ENCODE measurements at regions of chr17 and their contacts with region 1.

Region 1: DNA sequence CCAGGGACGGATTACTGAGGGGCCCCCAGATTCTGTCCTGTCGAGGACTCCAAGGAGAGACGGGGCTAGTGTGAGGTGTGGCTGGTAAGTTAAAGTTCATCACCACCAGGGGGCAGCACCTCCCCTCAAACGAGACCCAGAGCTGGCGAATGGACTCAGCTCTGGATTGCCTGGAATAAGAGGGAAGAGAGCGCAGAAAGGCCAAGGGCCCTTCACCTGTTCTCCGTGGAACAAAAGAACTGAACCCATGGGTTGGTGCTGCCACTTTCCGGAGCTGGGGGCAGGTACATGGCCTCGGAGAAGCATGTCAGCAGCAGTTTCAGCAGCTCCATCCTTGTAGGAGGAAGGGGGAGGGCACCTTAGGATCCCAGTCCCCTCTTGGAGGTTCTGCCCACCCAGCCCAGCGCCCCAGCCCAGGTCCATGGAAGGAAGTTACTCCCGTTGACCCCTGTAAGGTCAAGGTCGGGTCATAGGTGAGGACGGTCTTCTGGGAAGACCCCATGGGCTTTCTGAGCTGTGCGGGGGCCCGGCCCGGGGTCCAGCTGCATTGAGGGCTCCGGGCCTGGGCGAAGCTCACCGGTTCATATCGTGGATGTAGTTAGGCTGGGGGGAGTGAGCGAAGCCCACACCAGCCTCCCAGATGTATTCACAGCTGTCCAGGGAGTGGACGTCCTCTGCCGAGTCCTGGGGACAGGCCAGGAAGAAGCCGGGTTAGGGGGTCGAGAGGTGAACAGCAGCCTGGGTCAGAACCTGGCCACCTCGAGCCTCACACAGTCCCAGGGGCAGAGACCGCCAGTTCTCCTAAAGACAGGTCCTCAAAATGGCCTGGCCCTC is 10.7 kb downstream of the HID1 start:
- DNase-seq: no peak
- H3K4me3 ChIP-seq: no peak overlapping the region
- H3K27ac ChIP-seq: no peak overlapping the region
- H3K4me1 ChIP-seq: peaks cover 6% of the 10 kb centered on the region
- H3K27me3 ChIP-seq: no peaks in the 10 kb centered on the region
- CTCF ChIP-seq: peak; percentile 61 to 88 (median 65)
- POLR2A ChIP-seq: no peak

Region 2: DNA sequence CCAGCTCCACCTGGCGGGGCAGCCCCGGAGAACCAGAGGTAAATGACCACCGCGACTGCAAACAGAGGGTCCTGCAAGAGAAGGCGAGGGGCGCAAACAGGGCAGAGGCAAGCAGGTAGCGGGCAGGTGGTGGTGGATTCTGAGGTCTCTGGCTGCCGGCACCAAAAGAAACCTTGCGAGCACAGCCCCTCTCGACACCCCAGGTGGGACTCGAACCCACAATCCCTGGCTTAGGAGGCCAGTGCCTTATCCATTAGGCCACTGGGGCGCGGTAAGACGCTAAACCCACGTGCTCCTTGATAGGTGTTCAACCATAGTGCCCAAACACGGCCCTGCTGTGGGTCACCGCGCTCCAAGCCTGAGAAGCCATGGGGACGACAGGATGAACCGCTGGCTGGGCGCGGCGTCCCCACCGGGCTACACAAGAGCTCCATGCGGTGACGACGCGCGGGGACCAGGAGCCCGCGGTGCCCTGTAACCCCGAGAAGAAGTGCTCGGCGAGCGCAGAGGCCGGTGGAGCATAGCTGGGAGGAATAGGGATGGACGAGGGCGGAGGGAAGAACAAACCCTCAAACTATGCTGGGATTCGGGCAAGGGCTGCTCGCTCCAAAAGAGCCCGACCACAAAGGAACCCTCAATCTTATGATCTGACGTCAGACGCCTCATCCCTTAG is 72.5 kb after region 1 on chr17:
- intact Hi-C with region 1: loop called (anchors 10 kb)
- DNase-seq: peak in 1 of 2 donors; percentile 96
- H3K4me3 ChIP-seq: peak overlapping the region; percentile 66 to 81
- H3K27ac ChIP-seq: peak overlapping the region; percentile 98
- H3K4me1 ChIP-seq: peaks cover 37% of the 10 kb centered on the region
- H3K27me3 ChIP-seq: no peaks in the 10 kb centered on the region
- CTCF ChIP-seq: peak in 1 of 3 experiments; percentile 14
- POLR2A ChIP-seq: no peak

Region 3: DNA sequence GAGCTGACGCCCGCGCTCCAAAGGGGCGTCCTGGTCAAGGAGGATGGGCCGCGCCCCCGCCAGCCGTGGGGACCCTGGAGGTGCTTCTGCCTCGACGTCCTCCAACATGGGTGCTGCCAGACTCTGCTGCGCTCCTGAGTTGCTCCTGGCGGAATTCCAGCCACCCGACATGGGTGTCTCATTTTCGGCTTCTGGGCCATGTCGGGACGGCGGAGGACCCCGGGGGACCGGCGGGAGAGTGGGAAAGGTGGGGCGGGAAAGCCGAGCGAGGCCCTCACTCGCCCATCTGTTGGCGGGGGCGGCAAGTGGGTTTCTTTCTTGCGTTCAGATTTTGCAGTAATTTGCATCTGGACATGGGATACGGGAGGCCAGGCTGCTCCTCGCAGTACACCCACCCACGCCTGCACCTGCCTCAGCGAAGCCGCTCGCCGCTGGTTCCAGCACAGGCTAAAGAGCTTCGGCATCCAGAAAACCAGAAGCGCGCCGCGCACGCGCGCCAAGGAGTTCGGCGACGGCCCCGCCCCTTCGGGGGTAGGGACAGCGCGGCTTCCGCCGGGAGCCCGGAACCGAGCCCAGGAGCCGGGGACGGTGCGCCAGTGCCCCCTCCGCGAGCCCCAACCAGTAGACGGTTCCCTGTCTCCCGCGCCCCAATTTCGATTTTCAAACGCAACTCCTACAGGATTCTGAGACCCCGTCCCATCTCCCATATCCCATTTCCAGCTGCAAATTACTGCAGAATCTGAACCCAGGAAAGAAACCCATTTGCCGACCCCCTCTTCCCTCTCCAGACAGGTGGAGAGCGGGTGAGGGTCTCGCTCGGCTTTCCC is 147.7 kb after region 1 on chr17 and contains the start of gene ARMC7:
- intact Hi-C with region 1: loop called (anchors 10 kb)
- DNase-seq: no peak
- H3K4me3 ChIP-seq: peak within 1 kb of the TSS; percentile 86 to 95
- H3K27ac ChIP-seq: peak within 1 kb of the TSS; percentile 87
- H3K4me1 ChIP-seq: peaks cover 34% of the 10 kb centered on the region
- H3K27me3 ChIP-seq: no peaks in the 10 kb centered on the region
- CTCF ChIP-seq: no peak
- POLR2A ChIP-seq: peak in 1 of 2 donors; percentile 62
- total RNA-seq, gene ARMC7: 12.8 TPM

Region 4: DNA sequence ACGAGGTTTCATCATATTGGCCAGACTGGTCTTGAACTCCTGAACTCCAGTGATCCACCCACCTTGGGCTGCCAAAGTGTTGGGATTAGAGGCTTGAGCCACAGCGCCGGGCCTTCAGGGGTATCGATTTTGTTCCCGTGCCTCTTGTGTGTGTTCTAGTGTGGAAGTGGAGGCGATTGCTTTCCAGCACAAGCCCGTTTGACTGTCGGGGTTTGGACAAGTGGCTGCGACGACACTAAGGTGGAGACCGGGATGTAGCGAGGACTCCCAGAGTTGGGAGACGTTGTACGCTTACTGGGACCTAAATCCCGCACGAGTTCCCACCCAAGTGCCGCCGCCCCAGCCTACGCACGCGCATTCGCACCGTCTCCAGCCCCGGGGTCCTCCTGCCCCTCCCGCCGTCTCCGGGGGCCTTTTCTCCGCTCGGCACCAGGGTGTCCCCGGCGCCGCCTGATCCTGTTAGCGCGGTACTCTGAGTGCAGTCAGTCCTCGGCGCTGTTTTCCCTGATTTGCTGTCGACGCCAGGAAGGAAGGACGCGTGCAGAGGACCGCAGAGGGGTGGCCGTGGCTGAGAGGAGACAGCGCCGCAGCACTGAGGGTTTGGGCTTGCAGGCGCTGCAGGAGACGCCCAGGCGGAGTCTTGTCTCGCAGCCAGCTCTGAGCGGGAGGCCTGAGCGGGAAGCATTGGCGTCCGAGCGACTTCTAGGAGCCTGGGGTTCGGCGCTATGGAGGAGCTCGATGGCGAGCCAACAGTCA is 243.3 kb after region 1 on chr17 and contains the start of gene NUP85:
- intact Hi-C with region 1: loop called (anchors 5 kb)
- DNase-seq: peak; percentile 92 to 97
- H3K4me3 ChIP-seq: peak within 1 kb of the TSS; percentile 73 to 99
- H3K27ac ChIP-seq: peak within 1 kb of the TSS; percentile 94
- H3K4me1 ChIP-seq: peaks cover 30% of the 10 kb centered on the region
- H3K27me3 ChIP-seq: no peaks in the 10 kb centered on the region
- CTCF ChIP-seq: no peak
- POLR2A ChIP-seq: peak in 1 of 2 donors; percentile 63
- total RNA-seq, gene NUP85: 33.9 TPM